CD4-positive, alpha-beta memory T cell (primary cell): ENCODE measurements at regions of chr6 and their contacts with region 1.

Region 1: DNA sequence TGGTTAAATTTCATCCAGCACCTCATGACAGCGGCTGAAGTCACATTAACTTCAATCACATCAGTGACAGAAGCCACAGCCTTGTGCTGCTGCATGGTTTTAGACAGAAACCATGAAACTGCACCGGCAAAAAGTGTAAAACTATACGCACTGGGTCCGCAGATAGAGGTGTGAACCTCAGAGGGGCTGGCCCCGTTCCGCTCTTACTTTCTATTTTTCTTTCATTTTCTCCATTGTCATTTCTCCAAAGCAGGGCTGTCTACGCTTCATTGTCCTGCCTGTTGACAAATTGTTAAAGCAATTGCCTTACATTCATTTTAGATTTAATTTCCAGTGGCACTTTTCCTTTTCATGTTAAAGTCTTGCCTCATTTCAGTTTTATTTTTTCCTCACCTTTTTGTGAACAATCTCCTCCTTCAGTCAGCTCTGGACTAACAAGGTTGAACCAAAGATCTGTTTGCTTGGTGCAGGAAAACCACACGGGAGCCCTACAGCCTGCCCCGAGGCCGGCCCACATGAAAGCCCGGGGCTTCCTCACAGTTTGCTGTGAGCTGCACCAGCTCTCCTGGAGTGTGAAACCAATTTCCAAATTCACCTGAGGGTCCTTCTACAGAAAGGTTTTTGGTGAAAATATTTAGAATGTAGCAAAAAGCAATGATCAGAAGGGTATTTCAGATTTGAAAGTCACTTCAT is 63.7 kb downstream of the PRR18 start:
- DNase-seq: peak in 3 of 5 donors; percentile 26 to 46 (median 26)
- H3K4me3 ChIP-seq: no peak overlapping the region
- H3K4me3 Mint-ChIP-seq: peak overlapping the region; percentile 67 to 91 (median 77)
- H3K27ac ChIP-seq: no peak overlapping the region
- H3K27ac Mint-ChIP-seq: peak overlapping the region; percentile 4 to 90 (median 55)
- H3K4me1 ChIP-seq: peaks cover 30% of the 10 kb centered on the region
- H3K4me1 Mint-ChIP-seq: peaks cover 14 to 38% (median 26%) of the 10 kb centered on the region in 4 donors
- H3K27me3 ChIP-seq: no peaks in the 10 kb centered on the region
- H3K27me3 Mint-ChIP-seq: peaks cover 1 to 3% of the 10 kb centered on the region in 2 donors

Region 2: DNA sequence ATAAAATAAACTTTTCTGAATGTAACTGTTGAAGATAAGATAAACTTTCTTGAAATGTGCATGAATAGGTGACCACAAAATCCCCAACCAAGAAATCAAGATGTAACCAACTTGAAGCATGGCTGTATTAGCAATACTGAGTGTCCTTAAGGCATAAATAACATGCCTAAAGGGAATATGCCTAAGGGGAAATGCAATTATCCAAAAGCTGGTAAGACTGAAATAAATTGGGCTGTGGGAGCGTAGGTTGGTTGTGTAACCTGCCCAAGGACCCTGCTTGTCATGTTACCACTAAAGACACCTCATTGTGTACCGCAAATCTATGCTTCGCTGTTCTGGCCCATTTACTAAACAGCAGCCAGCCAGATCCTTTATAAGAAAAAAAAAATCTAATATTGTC is 380.7 kb before region 1 on chr6:
- CTCF ChIA-PET with region 1: no interaction called
- POLR2A ChIA-PET with region 1: no interaction called
- intact Hi-C with region 1: no loop called
- DNase-seq: no peak
- H3K4me3 ChIP-seq: no peak overlapping the region
- H3K4me3 Mint-ChIP-seq: no peak overlapping the region
- H3K27ac ChIP-seq: no peak overlapping the region
- H3K27ac Mint-ChIP-seq: no peak overlapping the region
- H3K4me1 ChIP-seq: no peaks in the 10 kb centered on the region
- H3K4me1 Mint-ChIP-seq: no peaks in the 10 kb centered on the region
- H3K27me3 ChIP-seq: no peaks in the 10 kb centered on the region
- H3K27me3 Mint-ChIP-seq: peaks cover 6 to 10% of the 10 kb centered on the region in 2 donors

Region 3: GRCh38 chr6:166087246-166087645 is 157.3 kb before region 1 on chr6:
- CTCF ChIA-PET with region 1: no interaction called
- POLR2A ChIA-PET with region 1: no interaction called
- intact Hi-C with region 1: no loop called
- DNase-seq: no peak
- H3K4me3 ChIP-seq: no peak overlapping the region
- H3K4me3 Mint-ChIP-seq: no peak overlapping the region
- H3K27ac ChIP-seq: no peak overlapping the region
- H3K27ac Mint-ChIP-seq: no peak overlapping the region
- H3K4me1 ChIP-seq: no peaks in the 10 kb centered on the region
- H3K4me1 Mint-ChIP-seq: no peaks in the 10 kb centered on the region
- H3K27me3 ChIP-seq: no peaks in the 10 kb centered on the region
- H3K27me3 Mint-ChIP-seq: peaks cover 3 to 6% of the 10 kb centered on the region in 2 donors

Region 4: GRCh38 chr6:166192136-166192535 is 52.4 kb before region 1 on chr6:
- CTCF ChIA-PET with region 1: no interaction called
- POLR2A ChIA-PET with region 1: no interaction called
- intact Hi-C with region 1: no loop called
- DNase-seq: no peak
- H3K4me3 ChIP-seq: no peak overlapping the region
- H3K4me3 Mint-ChIP-seq: no peak overlapping the region
- H3K27ac ChIP-seq: no peak overlapping the region
- H3K27ac Mint-ChIP-seq: no peak overlapping the region
- H3K4me1 ChIP-seq: no peaks in the 10 kb centered on the region
- H3K4me1 Mint-ChIP-seq: no peaks in the 10 kb centered on the region
- H3K27me3 ChIP-seq: no peaks in the 10 kb centered on the region
- H3K27me3 Mint-ChIP-seq: peaks cover 0 to 8% of the 10 kb centered on the region in 2 donors

Region 5: DNA sequence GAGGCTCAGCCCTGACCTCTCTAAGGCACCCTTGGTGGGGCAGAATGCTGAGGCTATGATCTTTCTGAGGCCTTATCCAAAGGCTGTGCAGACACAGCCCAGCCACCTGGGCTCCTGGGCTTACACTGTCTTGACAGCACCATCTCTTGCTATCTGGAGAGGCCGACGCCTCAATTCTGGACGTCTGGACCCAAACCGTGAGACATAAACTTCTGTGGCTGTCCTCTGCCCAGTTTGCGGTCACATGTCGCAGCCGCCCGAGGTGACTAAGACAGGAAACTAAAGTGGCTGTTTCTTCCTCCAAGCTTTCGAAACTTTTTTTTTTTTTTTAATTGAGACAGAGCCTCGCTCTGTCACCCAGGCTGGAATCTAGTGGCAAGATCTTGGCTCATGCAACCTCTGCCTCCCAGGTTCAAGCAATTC is 14.4 kb after region 1 on chr6:
- CTCF ChIA-PET with region 1: interaction called, 5 read pairs
- POLR2A ChIA-PET with region 1: interaction called, 30 read pairs
- intact Hi-C with region 1: loop called (anchors 1 kb)
- DNase-seq: peak in 1 of 5 donors; percentile 68
- H3K4me3 ChIP-seq: no peak overlapping the region
- H3K4me3 Mint-ChIP-seq: peak overlapping the region in 6 of 8 donors; percentile 75 to 87 (median 82)
- H3K27ac ChIP-seq: no peak overlapping the region
- H3K27ac Mint-ChIP-seq: peak overlapping the region in 6 of 7 donors; percentile 36 to 96 (median 92)
- H3K4me1 ChIP-seq: peaks cover 32% of the 10 kb centered on the region
- H3K4me1 Mint-ChIP-seq: peaks cover 4 to 48% (median 34%) of the 10 kb centered on the region in 4 donors
- H3K27me3 ChIP-seq: peaks cover under 1% of the 10 kb centered on the region
- H3K27me3 Mint-ChIP-seq: peaks cover 6 to 8% of the 10 kb centered on the region in 2 donors

Region 6: GRCh38 chr6:166351715-166352285 is 107.3 kb after region 1 on chr6:
- CTCF ChIA-PET with region 1: no interaction called
- POLR2A ChIA-PET with region 1: no interaction called
- intact Hi-C with region 1: no loop called
- DNase-seq: no peak
- H3K4me3 ChIP-seq: no peak overlapping the region
- H3K4me3 Mint-ChIP-seq: no peak overlapping the region
- H3K27ac ChIP-seq: no peak overlapping the region
- H3K27ac Mint-ChIP-seq: peak overlapping the region in 2 of 7 donors; percentile 18 to 42
- H3K4me1 ChIP-seq: no peaks in the 10 kb centered on the region
- H3K4me1 Mint-ChIP-seq: no peaks in the 10 kb centered on the region
- H3K27me3 ChIP-seq: no peaks in the 10 kb centered on the region
- H3K27me3 Mint-ChIP-seq: peaks cover 4 to 5% of the 10 kb centered on the region in 2 donors